ENCODE measurements at regions of chr11 and their contacts with region 1.

Region 1: GRCh38 chr11:41866525-41866924 is 407.1 kb upstream of the LRRC4C start:
- DNase-seq: no peak

Region 2: GRCh38 chr11:42462558-42463310 is 596.2 kb after region 1 on chr11:
- intact Hi-C with region 1: loop called in 1 of 2 experiments (anchors 5 kb)
- DNase-seq: no peak